Breast epithelium (tissue), 4 donors: ENCODE measurements at regions of chr9 and their contacts with region 1.

Region 1: DNA sequence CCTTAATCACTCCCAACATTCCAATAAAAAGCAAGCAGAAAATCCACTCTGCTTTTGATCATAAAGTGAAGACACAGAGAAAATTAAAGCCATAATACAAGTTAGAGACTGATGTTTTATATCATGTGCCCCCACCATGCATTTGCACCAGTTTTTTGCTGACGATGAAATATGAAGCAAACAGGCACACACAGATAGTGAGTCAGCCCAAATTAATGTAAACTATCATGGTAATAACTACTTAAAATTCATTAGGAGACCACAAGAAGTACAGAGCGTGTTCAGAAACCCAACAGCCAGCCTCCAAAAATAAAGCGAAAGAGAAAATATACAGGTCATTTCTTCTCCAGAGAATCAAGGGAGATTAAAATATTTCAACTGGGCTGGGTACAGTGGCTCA is 46.4 kb upstream of the KDM4C start:
- DNase-seq: no peak
- H3K4me3 ChIP-seq: no peak overlapping the region
- H3K27ac ChIP-seq: no peak overlapping the region
- H3K4me1 ChIP-seq: no peaks in the 10 kb centered on the region
- H3K27me3 ChIP-seq: no peaks in the 10 kb centered on the region
- CTCF ChIP-seq: no peak
- POLR2A ChIP-seq: no peak

Region 2: GRCh38 chr9:6757456-6758247 is 46.2 kb after region 1 on chr9 and contains the start of gene KDM4C:
- intact Hi-C with region 1: no loop called
- DNase-seq: peak; percentile 91 to 94
- H3K4me3 ChIP-seq: peak within 1 kb of the TSS; percentile 79 to 99 (median 94)
- H3K27ac ChIP-seq: peak within 1 kb of the TSS; percentile 98 to 99
- H3K4me1 ChIP-seq: no peaks in the 10 kb centered on the region
- H3K27me3 ChIP-seq: no peaks in the 10 kb centered on the region
- CTCF ChIP-seq: no peak
- POLR2A ChIP-seq: peak; percentile 57
- total RNA-seq, gene KDM4C: 37.8 to 80.9 (median 60.0) TPM

Region 3: DNA sequence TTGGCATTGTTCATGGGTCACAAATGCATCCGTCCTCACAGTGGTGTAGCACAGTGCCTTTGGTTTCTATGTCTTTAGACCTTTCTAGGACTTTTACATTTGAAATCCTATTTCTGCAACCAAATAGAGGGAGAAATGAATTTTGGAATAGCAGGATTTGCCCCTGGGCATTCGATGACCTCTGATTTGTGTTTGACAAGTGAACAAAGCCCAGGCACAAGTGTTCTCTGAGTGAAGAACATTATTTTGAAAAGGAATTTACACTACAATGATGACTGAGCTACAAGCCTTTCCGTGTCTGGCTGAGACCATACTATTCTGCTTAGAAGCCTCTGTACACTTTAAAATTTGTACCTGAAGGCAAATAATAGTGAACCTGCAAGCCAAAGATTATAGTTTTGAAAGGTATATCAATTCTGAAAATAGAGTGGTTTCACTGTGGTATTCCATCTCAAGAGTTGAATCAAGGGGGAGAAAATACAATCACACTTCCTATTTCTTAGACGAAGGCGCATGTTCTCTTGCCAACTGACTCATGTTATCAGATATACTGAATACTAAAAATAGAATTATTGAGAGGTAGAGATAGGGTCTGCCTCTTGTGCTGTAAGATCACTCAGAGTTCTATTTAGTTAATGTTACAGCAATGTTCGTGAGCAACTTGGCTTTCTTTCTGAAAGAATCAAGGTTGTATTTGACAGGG is 343.9 kb after region 1 on chr9:
- intact Hi-C with region 1: loop called (anchors 5 kb)
- DNase-seq: no peak
- H3K4me3 ChIP-seq: no peak overlapping the region
- H3K27ac ChIP-seq: no peak overlapping the region
- H3K4me1 ChIP-seq: no peaks in the 10 kb centered on the region
- H3K27me3 ChIP-seq: no peaks in the 10 kb centered on the region
- CTCF ChIP-seq: no peak
- POLR2A ChIP-seq: no peak